Ascending aorta (tissue), 2 donors: ENCODE measurements at regions of chr5 and their contacts with region 1.

Region 1: GRCh38 chr5:154654486-154655371 is 100.4 kb upstream of the LARP1 start:
- DNase-seq: no peak
- H3K4me3 ChIP-seq: peak overlapping the region in 1 of 2 donors; percentile 40
- H3K27ac ChIP-seq: peak overlapping the region in 1 of 2 donors; percentile 44
- H3K4me1 ChIP-seq: no peaks in the 10 kb centered on the region
- H3K27me3 ChIP-seq: no peaks in the 10 kb centered on the region
- CTCF ChIP-seq: no peak

Region 2: DNA sequence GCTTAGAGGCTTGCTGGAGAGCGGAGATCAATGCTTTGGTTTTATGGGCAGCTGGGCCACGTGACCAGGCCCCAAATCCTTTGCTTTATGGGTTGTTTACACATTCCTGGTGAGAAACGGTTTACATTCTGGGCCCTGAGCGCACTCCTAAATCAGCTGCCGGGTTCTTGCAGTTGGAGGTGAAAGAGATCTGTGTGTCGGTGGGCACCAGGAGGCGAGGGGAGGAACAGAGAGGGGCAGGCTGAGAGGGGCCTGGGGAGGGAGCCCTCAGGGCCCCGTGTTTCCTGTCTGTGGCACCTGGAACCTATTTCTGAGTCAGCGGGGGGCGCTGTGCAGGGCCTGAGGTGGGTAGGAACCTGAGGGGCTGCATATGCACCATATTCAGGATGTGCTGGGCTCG is 113.2 kb before region 1 on chr5:
- intact Hi-C with region 1: no loop called
- DNase-seq: no peak
- H3K4me3 ChIP-seq: no peak overlapping the region
- H3K27ac ChIP-seq: no peak overlapping the region
- H3K4me1 ChIP-seq: no peaks in the 10 kb centered on the region
- H3K27me3 ChIP-seq: no peaks in the 10 kb centered on the region
- CTCF ChIP-seq: no peak

Region 3: GRCh38 chr5:154791535-154791934 is 136.8 kb after region 1 on chr5:
- intact Hi-C with region 1: loop called (anchors 5 kb)
- DNase-seq: no peak
- H3K4me3 ChIP-seq: no peak overlapping the region
- H3K27ac ChIP-seq: no peak overlapping the region
- H3K4me1 ChIP-seq: peaks cover 7 to 11% of the 10 kb centered on the region in 2 donors
- H3K27me3 ChIP-seq: no peaks in the 10 kb centered on the region
- CTCF ChIP-seq: no peak